ENCODE measurements at regions of chr19 and their contacts with region 1.

Region 1: GRCh38 chr19:40444192-40445028 is at the start of gene SERTAD3:
- DNase-seq: peak; percentile 98
- ATAC-seq: peak; percentile 70
- H3K4me3 Mint-ChIP-seq: peak within 1 kb of the TSS; percentile 96
- H3K27ac Mint-ChIP-seq: peak within 1 kb of the TSS; percentile 96
- H3K4me1 Mint-ChIP-seq: peaks cover 16% of the 10 kb centered on the region
- H3K27me3 Mint-ChIP-seq: no peaks in the 10 kb centered on the region
- total RNA-seq, gene SERTAD3: 8.4 to 12.0 TPM

Region 2: DNA sequence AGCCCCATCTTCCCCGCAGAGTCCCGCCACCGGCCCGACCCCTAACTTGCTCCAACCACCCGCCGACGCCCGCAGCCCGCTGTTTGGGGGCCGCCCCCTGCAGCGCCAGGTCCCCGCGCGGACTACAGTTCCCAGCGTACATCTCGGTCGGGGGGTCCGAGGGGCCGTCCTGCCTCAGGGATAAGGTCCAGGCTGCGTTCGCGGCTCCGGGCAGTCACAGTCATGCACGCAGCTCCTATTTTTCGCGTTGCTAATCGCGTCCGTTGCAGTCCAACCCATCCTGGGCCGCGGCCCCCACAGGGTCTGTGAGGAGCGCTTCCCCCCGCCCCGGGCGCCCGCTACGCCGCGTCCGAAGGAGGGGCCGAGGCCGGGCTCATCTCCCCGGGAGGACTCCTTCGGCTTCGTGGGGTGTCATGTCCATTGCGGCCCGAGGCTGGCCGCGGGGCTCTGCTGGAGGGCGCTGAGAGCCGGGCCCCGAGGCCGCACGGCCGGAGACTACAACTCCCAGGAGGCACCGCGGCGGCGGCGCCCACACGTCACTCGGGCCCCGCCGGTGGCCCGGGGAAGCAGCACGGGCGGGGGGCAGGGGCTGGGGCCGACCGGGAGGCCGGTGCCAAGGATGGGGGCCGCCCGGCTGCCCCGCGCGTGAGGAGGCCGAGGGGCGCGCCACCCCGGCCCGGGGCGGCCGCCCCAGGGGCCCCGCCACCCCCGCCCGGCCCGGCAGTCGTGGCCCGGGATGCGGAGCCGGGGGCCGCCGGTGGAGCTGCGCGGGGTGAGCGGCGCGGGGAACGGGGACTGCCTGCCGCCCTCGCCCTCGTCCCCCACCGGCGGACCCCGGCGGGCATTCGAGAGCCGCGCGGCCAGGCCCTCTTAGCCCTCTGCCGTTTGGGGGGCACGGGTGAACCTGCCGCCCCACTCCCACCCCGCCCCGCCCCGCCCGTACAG is 253.2 kb before region 1 on chr19 and contains the start of gene MAP3K10:
- CTCF ChIA-PET with region 1: no interaction called
- POLR2A ChIA-PET with region 1: interaction called, 3 read pairs
- intact Hi-C with region 1: loop called in 1 of 2 experiments (anchors 1 kb)
- DNase-seq: peak; percentile 89
- ATAC-seq: peak; percentile 88
- H3K4me3 Mint-ChIP-seq: peak within 1 kb of the TSS; percentile 80
- H3K27ac Mint-ChIP-seq: peak within 1 kb of the TSS; percentile 92
- H3K4me1 Mint-ChIP-seq: peaks cover 20% of the 10 kb centered on the region
- H3K27me3 Mint-ChIP-seq: no peaks in the 10 kb centered on the region
- total RNA-seq, gene MAP3K10: 8.7 to 10.8 TPM

Region 3: DNA sequence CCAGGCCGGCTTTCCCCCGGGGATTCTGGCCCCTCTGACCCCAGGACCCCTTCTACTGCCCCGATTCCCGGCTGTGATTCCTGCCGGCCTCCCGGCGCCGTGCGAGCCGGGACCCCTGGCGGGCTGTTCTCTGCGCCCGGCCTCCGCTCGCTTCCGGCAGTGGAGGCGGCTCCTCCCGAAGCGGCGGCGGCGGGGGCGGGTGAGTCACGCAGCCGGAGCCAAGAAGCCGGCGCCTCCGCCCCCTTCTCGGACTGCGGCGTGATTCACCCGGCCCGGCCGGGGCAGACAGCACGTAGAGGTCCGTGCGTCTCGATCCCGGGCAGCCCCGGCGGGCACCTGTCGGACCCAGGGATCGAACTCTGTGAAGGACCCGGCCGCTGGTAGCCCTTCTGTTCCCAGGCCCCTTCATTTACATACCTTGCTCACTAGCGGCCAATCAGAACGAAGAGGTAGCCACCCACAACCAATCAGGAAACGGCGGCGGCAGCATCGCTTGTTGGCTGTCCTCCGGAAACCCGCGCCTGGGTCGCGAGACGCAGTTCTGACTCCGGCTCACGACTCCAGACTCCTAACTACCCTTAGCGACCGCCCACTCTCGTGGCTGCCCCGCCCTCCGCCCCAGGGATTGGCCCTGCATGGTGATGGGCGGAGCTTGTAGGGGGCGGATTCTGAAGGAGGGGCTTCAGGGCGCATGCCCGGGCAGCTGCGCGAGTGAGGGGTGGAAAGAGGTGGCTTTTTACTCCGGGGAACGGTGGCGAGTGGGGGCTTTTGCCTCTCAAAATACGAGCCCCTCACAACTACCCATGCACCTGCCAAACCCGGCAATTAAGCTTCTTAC is 18.7 kb before region 1 on chr19 and contains the start of gene SERTAD1:
- CTCF ChIA-PET with region 1: interaction called, 11 read pairs
- POLR2A ChIA-PET with region 1: interaction called, 9 read pairs
- intact Hi-C with region 1: loop called (anchors 1 kb)
- DNase-seq: peak; percentile 100
- ATAC-seq: peak; percentile 91
- H3K4me3 Mint-ChIP-seq: peak within 1 kb of the TSS; percentile 89
- H3K27ac Mint-ChIP-seq: peak within 1 kb of the TSS; percentile 96
- H3K4me1 Mint-ChIP-seq: peaks cover 20% of the 10 kb centered on the region
- H3K27me3 Mint-ChIP-seq: no peaks in the 10 kb centered on the region
- total RNA-seq, gene SERTAD1: 10.0 to 14.7 TPM

Region 4: GRCh38 chr19:40457048-40457447 is 12.6 kb after region 1 on chr19:
- CTCF ChIA-PET with region 1: no interaction called
- POLR2A ChIA-PET with region 1: no interaction called
- intact Hi-C with region 1: no loop called
- DNase-seq: no peak
- ATAC-seq: no peak
- H3K4me3 Mint-ChIP-seq: no peak overlapping the region
- H3K27ac Mint-ChIP-seq: no peak overlapping the region
- H3K4me1 Mint-ChIP-seq: no peaks in the 10 kb centered on the region
- H3K27me3 Mint-ChIP-seq: no peaks in the 10 kb centered on the region

Region 5: GRCh38 chr19:40576585-40577451 is 132.4 kb after region 1 on chr19 and contains the start of gene SHKBP1:
- CTCF ChIA-PET with region 1: no interaction called
- POLR2A ChIA-PET with region 1: no interaction called
- intact Hi-C with region 1: loop called in 1 of 2 experiments (anchors 1 kb)
- DNase-seq: peak; percentile 96
- ATAC-seq: peak; percentile 100
- H3K4me3 Mint-ChIP-seq: peak within 1 kb of the TSS; percentile 85
- H3K27ac Mint-ChIP-seq: peak within 1 kb of the TSS; percentile 74
- H3K4me1 Mint-ChIP-seq: peaks cover 16% of the 10 kb centered on the region
- H3K27me3 Mint-ChIP-seq: no peaks in the 10 kb centered on the region
- total RNA-seq, gene SHKBP1: 100 to 155 TPM

Region 6: GRCh38 chr19:40662921-40663694 is 218.7 kb after region 1 on chr19:
- CTCF ChIA-PET with region 1: no interaction called
- POLR2A ChIA-PET with region 1: no interaction called
- intact Hi-C with region 1: no loop called
- DNase-seq: peak; percentile 96
- ATAC-seq: peak; percentile 81
- H3K4me3 Mint-ChIP-seq: peak overlapping the region; percentile 66
- H3K27ac Mint-ChIP-seq: peak overlapping the region; percentile 77
- H3K4me1 Mint-ChIP-seq: peaks cover 19% of the 10 kb centered on the region
- H3K27me3 Mint-ChIP-seq: no peaks in the 10 kb centered on the region

Region 7: DNA sequence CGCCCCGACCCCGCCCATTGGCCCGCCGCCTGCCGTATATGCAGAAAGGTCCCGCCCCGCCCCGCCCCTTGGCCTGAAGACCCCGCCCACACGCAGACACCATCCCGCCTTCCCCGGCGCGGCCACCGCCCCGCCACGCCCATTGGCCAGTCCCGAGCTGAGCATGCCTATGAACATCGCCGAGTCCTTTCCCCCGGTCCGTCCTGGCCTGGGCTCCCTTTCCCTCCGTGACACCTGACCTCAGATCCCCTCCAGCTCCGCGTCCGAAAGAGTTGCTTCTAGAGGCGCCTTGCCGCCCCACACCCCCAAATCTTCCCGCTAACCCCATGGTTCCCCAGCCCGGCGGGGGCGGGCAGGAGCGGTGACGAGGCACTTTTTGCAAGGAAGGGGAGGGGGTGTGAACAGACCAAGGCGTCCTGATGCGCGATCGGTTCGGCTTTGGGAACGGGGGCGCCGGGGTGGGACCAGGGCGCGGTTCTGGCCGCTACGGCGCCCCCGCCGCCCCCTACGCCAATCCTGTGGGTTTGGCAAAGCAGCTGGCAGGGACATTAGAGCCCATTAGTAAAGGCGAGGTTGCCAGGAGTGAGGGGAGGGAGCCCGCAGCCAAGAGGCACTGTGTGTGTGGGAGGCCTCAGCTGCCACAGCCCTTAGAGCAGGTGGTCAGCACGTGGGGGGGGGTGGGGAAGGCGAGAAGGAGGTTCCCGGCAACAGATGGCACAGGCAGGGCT is 246.4 kb after region 1 on chr19:
- CTCF ChIA-PET with region 1: no interaction called
- POLR2A ChIA-PET with region 1: no interaction called
- intact Hi-C with region 1: loop called in 1 of 2 experiments (anchors 1 kb)
- DNase-seq: peak; percentile 97
- ATAC-seq: peak; percentile 85
- H3K4me3 Mint-ChIP-seq: peak overlapping the region; percentile 80
- H3K27ac Mint-ChIP-seq: peak overlapping the region; percentile 87
- H3K4me1 Mint-ChIP-seq: peaks cover 5% of the 10 kb centered on the region
- H3K27me3 Mint-ChIP-seq: no peaks in the 10 kb centered on the region

Region 8: DNA sequence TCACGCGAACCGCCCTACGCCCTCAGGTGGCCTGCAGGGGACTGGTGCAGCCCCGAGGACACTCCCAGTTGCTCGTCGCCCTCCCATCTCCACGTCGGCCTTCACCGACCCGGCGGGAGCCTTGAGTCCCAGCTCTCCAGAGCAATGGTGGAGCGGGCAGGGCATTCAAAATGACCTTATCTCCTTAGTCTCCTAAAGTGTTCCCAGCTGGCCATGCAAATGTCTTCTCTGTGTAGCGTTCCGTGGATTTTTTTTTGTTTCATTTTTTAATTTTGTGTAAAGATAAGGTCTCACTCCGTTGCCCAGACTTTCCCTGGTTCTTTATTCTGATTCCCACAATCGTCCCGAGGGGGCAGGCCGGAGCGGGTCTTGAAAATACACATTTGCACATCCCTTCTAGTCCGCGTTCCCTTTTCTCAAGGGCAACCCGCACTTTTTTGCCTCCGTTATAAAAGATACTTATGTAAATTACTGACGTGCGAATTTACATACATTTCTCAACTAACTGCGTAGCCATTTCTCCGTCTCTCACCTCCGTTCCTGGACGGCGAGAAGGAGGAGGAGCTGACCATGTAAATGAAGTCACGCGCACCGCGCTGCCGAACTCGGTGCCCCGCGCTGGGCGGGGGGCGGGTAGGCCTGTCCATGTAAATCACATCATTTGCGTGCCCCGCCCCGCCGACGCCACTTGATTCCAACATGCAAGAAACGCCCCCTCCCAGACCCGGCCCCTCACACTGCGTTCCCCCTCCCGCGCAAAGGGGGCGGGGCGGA is 354.0 kb after region 1 on chr19:
- CTCF ChIA-PET with region 1: no interaction called
- POLR2A ChIA-PET with region 1: no interaction called
- intact Hi-C with region 1: loop called in 1 of 2 experiments (anchors 1 kb)
- DNase-seq: peak; percentile 100
- ATAC-seq: peak; percentile 82
- H3K4me3 Mint-ChIP-seq: peak overlapping the region; percentile 91
- H3K27ac Mint-ChIP-seq: peak overlapping the region; percentile 97
- H3K4me1 Mint-ChIP-seq: peaks cover 49% of the 10 kb centered on the region
- H3K27me3 Mint-ChIP-seq: no peaks in the 10 kb centered on the region